ENCODE measurements at regions of chr2 and their contacts with region 1.

Region 1: GRCh38 chr2:112764071-112765044 is at the start of gene CKAP2L:
- DNase-seq: peak; percentile 99
- H3K4me3 ChIP-seq: peak within 1 kb of the TSS; percentile 86
- H3K27ac ChIP-seq: peak within 1 kb of the TSS; percentile 75
- H3K27me3 ChIP-seq: no peaks in the 10 kb centered on the region
- CTCF ChIP-seq: no peak

Region 2: GRCh38 chr2:112941753-112942658 is 177.6 kb after region 1 on chr2:
- in situ Hi-C with region 1: loop called (anchors 25 kb)
- DNase-seq: peak; percentile 81
- H3K4me3 ChIP-seq: no peak overlapping the region
- H3K27ac ChIP-seq: no peak overlapping the region
- H3K27me3 ChIP-seq: no peaks in the 10 kb centered on the region
- CTCF ChIP-seq: peak; percentile 97

Region 3: DNA sequence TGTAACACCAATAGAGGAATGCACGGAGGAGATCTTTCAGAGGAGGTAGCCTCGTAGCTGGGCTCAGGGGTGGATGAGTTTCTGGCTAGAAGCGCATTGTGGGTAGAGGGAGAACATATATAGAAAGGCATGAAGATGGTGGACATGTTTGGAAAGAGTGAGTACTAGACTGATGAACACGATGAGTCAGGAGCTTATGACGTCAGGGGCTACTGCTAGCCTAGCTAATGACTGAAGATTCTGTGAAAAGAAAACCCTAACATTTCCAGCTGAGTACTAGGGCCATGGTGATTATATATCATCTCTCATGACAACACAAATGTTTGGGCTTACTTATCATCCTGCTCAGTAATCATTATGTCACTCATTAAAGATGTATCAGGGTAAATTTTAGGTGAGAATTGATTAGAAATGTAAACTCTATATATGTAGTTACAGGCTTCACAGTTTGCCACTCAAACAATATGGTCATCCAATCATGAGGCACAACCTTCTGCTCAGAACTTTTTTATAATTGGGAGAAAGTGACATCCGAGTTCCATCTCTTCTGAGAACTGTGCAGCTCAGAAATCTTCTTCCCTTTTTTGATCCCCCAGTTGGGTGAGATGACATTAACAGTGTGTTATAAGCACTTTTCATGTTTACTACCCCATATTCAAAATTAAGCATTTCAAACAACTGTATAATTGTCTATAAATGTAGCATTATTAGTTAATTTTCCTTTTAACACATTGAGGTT is 340.9 kb after region 1 on chr2:
- in situ Hi-C with region 1: no loop called
- DNase-seq: peak; percentile 84
- H3K4me3 ChIP-seq: no peak overlapping the region
- H3K27ac ChIP-seq: no peak overlapping the region
- H3K27me3 ChIP-seq: no peaks in the 10 kb centered on the region
- CTCF ChIP-seq: no peak

Measured in brain microvascular endothelial cell (primary cell).